RWPE1 (cell line): ENCODE measurements at regions of chr4 and their contacts with region 1.

Region 1: GRCh38 chr4:158172261-158173258 is at the start of gene GASK1B:
- DNase-seq: peak; percentile 50
- H3K27ac ChIP-seq: no peak within 1 kb of the TSS
- CTCF ChIP-seq: peak; percentile 70

Region 2: DNA sequence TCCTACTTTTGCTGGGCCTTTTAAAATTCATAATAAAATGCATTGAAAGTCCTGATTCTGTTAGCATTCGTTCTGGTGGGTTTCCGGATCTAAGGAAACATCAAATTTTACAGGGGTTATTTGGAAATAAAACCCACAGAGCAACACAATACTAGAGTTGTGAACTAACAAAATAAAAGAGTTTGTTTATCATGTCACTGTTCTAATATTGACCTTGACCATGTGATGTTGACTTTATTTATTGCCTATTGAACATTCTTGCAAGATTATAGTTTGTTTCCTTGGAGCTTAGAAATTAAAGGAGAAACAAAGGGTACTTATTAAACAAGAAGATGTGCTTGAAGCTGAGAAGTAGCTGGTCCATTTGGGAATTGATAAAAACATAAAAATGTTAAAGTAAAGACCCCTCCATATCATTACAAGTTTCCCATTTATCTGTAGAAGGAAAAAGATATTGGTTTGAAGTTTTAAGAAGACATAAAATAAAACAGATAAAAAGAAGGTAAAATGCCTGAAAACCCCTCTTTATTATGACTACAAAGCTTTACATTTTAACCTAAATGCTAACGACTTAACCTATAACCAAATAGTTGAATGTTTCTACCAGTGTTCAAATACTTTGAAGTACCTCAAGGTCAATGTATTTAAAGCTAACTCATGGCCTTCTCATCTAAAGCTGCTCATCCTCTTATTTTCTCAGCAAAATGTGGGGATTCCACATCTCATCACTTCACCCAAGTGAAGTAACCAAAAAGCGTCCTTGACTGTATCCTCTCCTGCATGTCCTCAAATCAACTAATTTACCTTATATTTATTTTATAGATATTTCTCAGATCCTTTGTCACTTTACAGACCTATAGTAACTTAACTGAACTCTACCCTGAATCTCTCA is 179.4 kb before region 1 on chr4:
- CTCF ChIA-PET with region 1: interaction called, 10 read pairs
- POLR2A ChIA-PET with region 1: no interaction called
- DNase-seq: no peak
- H3K27ac ChIP-seq: no peak overlapping the region
- CTCF ChIP-seq: no peak

Region 3: DNA sequence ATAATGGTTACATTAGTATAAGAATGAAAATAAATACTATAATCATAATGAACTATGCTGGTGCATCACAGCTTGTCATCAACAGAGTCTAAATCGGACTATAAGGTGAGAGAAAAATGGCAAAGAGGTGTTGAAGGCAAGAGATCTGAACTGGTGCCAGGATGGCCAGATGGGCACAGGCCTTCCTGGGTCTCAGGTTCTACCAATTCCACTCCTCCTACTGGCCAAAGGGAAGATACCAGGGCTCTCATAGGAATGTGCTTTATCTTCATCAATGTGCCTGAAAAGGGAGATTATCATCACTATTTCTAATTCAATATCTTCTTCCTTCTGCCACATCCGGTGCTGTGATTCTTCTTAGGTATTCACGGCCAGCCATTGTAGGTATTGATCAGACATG is 107.4 kb before region 1 on chr4:
- CTCF ChIA-PET with region 1: no interaction called
- POLR2A ChIA-PET with region 1: no interaction called
- DNase-seq: no peak
- H3K27ac ChIP-seq: no peak overlapping the region
- CTCF ChIP-seq: no peak

Region 4: GRCh38 chr4:158094413-158095134 is 78.0 kb before region 1 on chr4:
- CTCF ChIA-PET with region 1: no interaction called
- POLR2A ChIA-PET with region 1: no interaction called
- DNase-seq: peak; percentile 61
- H3K27ac ChIP-seq: no peak overlapping the region
- CTCF ChIP-seq: no peak

Region 5: DNA sequence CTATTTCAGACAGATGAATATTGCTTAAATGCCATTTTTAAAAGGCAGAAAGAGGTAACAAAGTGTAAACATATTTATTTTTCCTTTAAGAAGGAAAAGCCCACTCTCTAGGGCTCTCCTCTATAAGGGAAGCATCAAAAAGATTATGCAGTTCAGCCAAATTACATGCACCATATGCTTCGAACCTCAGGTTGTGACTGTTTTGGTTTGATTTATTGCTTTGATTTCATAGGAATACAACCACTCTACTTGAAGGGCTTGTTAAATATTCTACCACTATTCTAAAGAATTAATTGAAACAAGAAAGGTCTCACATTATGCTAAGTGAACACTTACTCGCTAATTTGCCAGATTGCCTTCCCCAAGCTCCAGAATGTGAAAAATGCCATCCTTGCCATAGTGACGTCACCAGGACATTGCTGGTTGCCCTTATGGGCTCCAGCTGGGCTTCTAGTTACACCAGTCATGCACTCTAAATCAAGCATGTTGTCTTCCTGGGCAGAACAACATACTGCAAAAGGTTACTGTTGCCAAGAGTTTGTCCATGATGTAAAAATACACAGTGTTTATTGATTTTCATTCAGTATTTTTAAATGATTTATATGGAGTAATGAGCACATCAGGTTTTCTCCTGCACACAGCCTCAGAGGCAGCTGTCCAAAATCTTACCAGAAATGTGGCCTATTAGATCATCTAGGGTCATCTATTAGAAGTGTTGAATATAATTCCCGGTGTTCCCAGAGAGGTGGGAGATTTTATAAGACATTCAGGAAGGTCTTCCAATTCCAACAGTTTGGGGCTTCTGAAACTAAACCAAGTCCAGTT is 765.9 kb after region 1 on chr4:
- CTCF ChIA-PET with region 1: no interaction called
- POLR2A ChIA-PET with region 1: no interaction called
- DNase-seq: no peak
- H3K27ac ChIP-seq: no peak overlapping the region
- CTCF ChIP-seq: no peak